PC-9 (cell line): ENCODE measurements at regions of chr5 and their contacts with region 1.

Region 1: GRCh38 chr5:39217365-39218281 is 1.7 kb downstream of the FYB1 start:
- DNase-seq: peak; percentile 80
- H3K4me3 ChIP-seq: no peak overlapping the region
- H3K27ac ChIP-seq: peak overlapping the region; percentile 69
- H3K4me1 ChIP-seq: peaks cover 52% of the 10 kb centered on the region
- H3K27me3 ChIP-seq: no peaks in the 10 kb centered on the region
- CTCF ChIP-seq: peak; percentile 99

Region 2: DNA sequence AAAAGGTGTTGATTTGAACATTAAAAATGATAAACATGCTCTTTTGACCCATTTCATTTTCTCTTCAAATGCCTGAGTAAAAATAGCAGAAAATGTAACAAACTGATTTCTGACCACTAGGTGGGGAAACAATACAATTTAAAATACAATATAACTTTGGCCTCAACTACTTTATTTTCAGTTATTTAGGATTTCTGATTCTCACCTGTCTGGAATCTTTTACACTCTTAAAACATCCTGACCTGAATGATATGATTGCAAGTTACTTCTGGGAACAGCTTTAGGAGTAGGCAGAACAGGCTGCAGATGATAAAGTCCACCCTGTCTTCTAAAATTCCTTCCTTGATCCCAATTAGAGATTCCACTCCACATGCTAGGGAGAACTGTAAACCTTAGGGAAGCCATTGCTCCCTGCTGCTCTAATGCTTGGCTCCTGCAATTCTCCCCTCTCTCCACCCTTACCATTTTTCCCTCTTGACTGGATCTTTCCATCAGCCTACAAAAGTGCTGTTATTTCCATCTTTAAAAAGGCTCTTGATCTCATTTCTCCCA is 68.6 kb before region 1 on chr5:
- CTCF ChIA-PET with region 1: interaction called, 12 read pairs
- POLR2A ChIA-PET with region 1: no interaction called
- intact Hi-C with region 1: loop called (anchors 1 kb)
- DNase-seq: no peak
- H3K4me3 ChIP-seq: no peak overlapping the region
- H3K27ac ChIP-seq: no peak overlapping the region; the same call in 1 of the 2 replicates
- H3K4me1 ChIP-seq: peaks cover 6% of the 10 kb centered on the region
- H3K27me3 ChIP-seq: no peaks in the 10 kb centered on the region
- CTCF ChIP-seq: peak; percentile 76

Region 3: DNA sequence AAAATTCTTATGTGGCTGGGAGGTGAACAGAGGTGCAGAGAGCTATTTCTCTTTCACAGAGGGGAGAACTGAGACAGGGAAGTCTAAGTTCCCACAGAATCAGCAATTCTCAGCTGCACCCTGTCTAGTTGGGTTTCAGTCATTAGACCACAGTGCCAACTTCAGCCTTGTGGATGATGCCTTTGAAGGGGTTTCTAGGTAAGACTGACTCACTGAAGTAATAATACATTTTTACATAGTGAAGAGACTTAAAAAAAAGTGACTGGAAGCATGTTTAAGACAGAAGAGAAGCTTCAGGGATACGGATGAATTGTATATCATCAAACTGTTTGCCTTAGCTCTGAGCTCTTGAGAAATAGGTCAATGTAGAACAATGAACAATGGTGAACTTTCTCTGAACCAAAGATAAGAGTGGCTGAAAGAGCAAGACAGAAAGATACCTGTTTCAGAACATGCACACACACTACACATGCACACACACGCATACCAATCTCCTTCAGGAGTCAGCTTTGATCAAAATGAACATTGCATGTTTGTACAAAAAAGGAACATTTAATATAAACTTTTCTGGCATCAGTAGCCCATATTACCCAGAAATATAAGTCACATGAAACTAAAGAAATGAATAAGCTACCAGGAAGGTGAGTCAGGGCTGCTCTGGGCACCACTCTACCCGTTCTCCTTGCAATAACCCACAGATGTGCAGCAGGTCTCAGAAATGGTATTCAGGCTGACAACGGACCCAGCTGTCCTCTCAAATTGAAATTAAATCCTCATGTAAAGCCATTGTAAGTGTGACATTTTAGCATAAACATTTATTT is 14.3 kb after region 1 on chr5:
- CTCF ChIA-PET with region 1: interaction called, 9 read pairs
- POLR2A ChIA-PET with region 1: interaction called, 10 read pairs
- intact Hi-C with region 1: no loop called
- DNase-seq: peak; percentile 53 to 76
- H3K4me3 ChIP-seq: no peak overlapping the region
- H3K27ac ChIP-seq: peak overlapping the region; percentile 61
- H3K4me1 ChIP-seq: peaks cover 13% of the 10 kb centered on the region
- H3K27me3 ChIP-seq: no peaks in the 10 kb centered on the region
- CTCF ChIP-seq: no peak

Region 4: DNA sequence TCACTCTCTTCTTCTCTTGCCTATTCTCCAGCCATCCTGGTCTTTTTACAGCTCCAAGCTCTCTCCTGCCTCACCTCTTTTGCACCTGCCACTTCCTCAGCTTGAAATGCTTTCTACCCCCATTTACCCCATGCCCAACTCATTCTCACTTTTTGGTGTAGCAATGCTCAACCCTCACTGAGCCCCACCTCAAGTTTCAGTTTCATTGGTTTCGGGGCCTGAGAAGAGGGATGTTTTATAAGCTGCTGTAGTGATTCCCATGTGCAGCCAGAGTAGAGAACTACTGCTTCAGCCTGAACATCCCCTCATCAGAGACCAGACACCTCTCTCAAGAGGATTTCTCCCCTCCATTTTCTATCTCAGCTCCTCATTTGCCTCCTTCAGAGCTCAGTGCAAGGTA is 46.9 kb after region 1 on chr5:
- CTCF ChIA-PET with region 1: no interaction called
- POLR2A ChIA-PET with region 1: no interaction called
- intact Hi-C with region 1: no loop called
- DNase-seq: no peak
- H3K4me3 ChIP-seq: no peak overlapping the region
- H3K27ac ChIP-seq: no peak overlapping the region
- H3K4me1 ChIP-seq: 0 out of 2 replicates have a peak, but pooled peaks cover 5% of the 10 kb centered on the region
- H3K27me3 ChIP-seq: no peaks in the 10 kb centered on the region
- CTCF ChIP-seq: no peak

Region 5: GRCh38 chr5:39376293-39376714 is 158.7 kb after region 1 on chr5:
- CTCF ChIA-PET with region 1: interaction called, 24 read pairs
- POLR2A ChIA-PET with region 1: no interaction called
- intact Hi-C with region 1: loop called (anchors 1 kb)
- DNase-seq: peak; percentile 63 to 66
- H3K4me3 ChIP-seq: no peak overlapping the region
- H3K27ac ChIP-seq: no peak overlapping the region
- H3K4me1 ChIP-seq: no peaks in the 10 kb centered on the region
- H3K27me3 ChIP-seq: no peaks in the 10 kb centered on the region
- CTCF ChIP-seq: peak; percentile 96

Region 6: GRCh38 chr5:39570403-39571027 is 352.9 kb after region 1 on chr5:
- CTCF ChIA-PET with region 1: no interaction called
- POLR2A ChIA-PET with region 1: no interaction called
- intact Hi-C with region 1: loop called (anchors 1 kb)
- DNase-seq: peak in 1 of 2 experiments; percentile 65
- H3K4me3 ChIP-seq: no peak overlapping the region
- H3K27ac ChIP-seq: no peak overlapping the region
- H3K4me1 ChIP-seq: no peaks in the 10 kb centered on the region
- H3K27me3 ChIP-seq: no peaks in the 10 kb centered on the region
- CTCF ChIP-seq: peak; percentile 94